Dendritic cell treated with granulocyte-macrophage colony-stimulating factor and Interleukin-4, amounts not matched to agents 40 ng/mL and 50 ng/mL, for 4 days (primary cell): ENCODE measurements at regions of chr16 and their contacts with region 1.

Region 1: DNA sequence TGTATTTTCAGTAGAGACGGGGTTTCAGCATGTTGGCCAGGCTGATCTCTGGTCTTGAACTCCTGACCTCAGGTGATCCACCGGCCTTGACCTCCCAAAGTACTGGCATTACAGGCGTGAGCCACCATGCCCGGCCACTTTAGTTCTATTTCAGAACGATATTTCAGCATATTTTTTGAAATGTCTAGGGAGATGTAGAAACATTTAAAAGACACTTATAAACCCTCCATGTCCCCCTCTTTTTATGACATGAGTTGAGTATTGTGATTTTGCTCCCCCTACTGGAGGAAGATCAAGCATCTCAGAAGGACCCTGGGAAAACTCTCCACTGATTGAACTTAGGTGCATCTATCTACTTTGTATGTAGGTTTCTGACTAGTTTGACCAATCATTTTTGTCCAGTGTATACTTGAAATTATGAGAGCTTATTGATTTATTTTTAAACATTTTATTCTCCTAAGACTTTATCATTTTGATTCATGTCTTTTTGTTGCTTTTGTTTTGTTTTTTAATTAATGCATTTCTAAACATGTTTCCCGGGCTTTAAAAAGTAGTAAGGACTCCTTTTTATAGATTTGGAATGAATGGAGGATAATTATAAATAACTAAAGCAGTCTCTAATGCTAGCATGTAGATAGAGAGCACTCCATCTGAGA is 105.1 kb downstream of the CHD9 start:
- H3K4me3 Mint-ChIP-seq: no peak overlapping the region
- H3K27ac Mint-ChIP-seq: no peak overlapping the region
- H3K4me1 Mint-ChIP-seq: peaks cover 4% of the 10 kb centered on the region
- H3K27me3 Mint-ChIP-seq: no peaks in the 10 kb centered on the region

Region 2: GRCh38 chr16:53198933-53199332 is 39.0 kb after region 1 on chr16:
- intact Hi-C with region 1: loop called (anchors 5 kb)
- H3K4me3 Mint-ChIP-seq: no peak overlapping the region
- H3K27ac Mint-ChIP-seq: no peak overlapping the region
- H3K4me1 Mint-ChIP-seq: peaks cover 18% of the 10 kb centered on the region
- H3K27me3 Mint-ChIP-seq: no peaks in the 10 kb centered on the region

Region 3: GRCh38 chr16:53323924-53324323 is 164.0 kb after region 1 on chr16:
- intact Hi-C with region 1: no loop called
- H3K4me3 Mint-ChIP-seq: no peak overlapping the region
- H3K27ac Mint-ChIP-seq: no peak overlapping the region
- H3K4me1 Mint-ChIP-seq: peaks cover 8% of the 10 kb centered on the region
- H3K27me3 Mint-ChIP-seq: no peaks in the 10 kb centered on the region